Calu3 (cell line): ENCODE measurements at regions of chr19 and their contacts with region 1.

Region 1: DNA sequence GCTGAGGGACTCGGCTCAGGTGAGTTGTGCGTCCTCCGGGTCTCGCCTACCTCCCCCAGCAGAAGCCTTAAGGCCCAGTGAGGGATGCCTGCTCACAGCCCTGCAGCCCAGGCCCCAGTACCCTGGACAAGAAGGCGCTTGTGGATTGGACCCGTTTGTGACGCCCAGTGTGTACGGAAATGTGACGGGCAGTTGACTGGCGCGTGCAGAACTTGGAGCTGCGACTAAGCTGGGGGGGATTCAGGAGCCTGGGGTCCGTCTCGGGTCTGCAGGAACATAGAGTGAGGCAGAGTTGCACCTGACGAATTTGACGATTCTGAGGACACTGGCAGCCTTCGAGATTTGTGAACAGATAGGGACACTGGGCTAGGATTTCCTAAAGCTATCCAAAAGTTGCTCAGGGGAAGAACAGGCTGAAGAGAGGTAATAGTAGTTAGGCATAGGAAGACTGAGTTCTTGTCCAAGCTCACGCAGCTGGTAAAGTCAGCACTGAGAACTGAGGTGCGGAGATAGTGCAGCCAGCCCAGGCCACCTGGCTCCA is 519 bp downstream of the ZNF551 start:
- DNase-seq: no peak
- H3K4me3 Mint-ChIP-seq: peak overlapping the region; percentile 84
- H3K27ac Mint-ChIP-seq: peak overlapping the region; percentile 37
- H3K4me1 Mint-ChIP-seq: peaks cover 19% of the 10 kb centered on the region
- H3K27me3 Mint-ChIP-seq: no peaks in the 10 kb centered on the region
- CTCF ChIP-seq: no peak

Region 2: DNA sequence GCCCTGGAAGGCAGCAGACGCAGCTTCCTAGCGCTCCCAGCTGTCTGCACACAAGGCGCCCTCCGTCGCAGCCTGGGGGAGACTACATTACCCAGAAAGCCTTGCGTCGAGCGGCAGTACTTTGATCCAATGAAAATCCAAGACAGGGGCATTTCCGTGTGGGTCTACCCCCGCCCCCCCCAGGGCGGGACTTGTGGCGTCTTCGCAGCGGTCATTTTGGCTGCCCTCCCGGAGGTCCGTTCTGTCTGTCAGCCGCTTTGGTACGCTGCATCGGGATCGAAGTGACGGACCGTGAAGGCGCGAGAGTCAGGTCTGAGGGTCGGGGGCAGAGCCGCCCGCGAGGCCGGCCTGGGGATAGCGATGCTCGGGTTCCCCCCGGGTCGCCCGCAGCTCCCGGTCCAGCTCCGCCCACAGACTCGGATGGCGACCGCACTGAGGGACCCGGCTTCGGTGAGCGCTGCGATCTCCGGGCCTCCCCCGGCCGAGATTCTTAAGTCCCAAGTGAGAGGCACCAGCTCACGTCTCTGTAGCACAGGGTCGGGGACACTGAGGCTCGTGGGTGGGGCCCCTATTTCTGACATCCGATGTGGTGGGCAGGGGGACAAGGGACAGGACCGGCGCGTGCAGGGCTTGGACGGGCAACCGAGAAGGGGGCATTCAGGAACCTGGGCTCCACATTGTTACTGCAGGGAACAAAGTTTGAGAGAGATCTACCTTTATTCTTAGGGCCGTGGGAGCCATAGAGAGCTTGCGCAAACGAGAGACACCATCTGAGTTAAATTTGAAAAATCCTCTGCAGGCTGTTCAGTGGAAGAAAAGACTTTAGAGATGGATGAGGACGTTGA is 49.1 kb before region 1 on chr19 and contains the start of gene ZNF211:
- CTCF ChIA-PET with region 1: no interaction called
- intact Hi-C with region 1: loop called (anchors 2 kb)
- DNase-seq: peak; percentile 95
- H3K4me3 Mint-ChIP-seq: peak within 1 kb of the TSS; percentile 83
- H3K27ac Mint-ChIP-seq: peak within 1 kb of the TSS; percentile 40
- H3K4me1 Mint-ChIP-seq: peaks cover 21% of the 10 kb centered on the region
- H3K27me3 Mint-ChIP-seq: no peaks in the 10 kb centered on the region
- CTCF ChIP-seq: no peak
- total RNA-seq, gene ZNF211: 10.2 and 11.0 TPM in 2 replicates